ENCODE measurements at regions of chr17 and their contacts with region 1.

Region 1: DNA sequence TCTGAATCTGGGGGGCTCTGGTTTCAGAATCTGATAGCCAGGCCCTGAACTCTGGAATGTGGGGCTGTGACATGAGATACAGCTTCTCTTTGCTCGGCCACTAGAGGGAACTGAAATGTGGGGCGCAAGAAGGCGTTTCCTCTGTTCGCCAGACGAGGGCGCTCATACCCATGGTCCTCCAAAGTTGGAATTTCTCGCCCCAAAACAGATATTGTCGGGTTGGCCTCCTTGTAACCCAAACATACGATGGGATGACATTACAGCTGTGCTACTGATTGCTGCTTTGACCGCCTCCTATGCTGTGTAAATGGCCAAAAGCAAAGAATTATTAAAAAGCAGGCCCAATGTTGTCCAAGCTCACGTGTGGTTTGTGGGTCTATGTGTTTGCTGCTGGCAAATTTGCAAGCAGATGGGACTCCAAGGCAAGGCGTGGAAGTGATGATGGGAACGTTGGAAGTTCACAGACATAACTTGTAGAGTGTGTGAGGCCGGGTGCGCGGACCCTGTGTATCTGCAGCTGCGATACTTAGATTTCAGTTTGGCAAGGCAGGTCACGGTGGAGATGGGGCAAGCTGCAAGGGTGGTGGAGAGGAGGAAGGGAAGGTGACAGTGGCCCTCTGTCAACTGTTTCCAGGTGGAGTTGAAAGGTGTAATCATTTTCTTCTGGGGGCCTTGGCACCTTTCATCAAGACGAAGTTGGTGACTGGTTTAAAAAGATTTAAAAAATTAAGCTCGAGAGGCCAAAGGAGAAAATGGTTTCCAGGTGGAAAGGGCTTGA is 13.0 kb upstream of the MSI2 start:
- DNase-seq: peak; percentile 47 to 80 (median 70)
- H3K4me3 ChIP-seq: no peak overlapping the region
- H3K27ac ChIP-seq: no peak overlapping the region
- H3K4me1 ChIP-seq: peaks cover 7% of the 10 kb centered on the region
- H3K27me3 ChIP-seq: no peaks in the 10 kb centered on the region
- CTCF ChIP-seq: peak; percentile 80 to 97 (median 92)
- EP300 ChIP-seq: no peak
- POLR2A ChIP-seq: no peak

Region 2: DNA sequence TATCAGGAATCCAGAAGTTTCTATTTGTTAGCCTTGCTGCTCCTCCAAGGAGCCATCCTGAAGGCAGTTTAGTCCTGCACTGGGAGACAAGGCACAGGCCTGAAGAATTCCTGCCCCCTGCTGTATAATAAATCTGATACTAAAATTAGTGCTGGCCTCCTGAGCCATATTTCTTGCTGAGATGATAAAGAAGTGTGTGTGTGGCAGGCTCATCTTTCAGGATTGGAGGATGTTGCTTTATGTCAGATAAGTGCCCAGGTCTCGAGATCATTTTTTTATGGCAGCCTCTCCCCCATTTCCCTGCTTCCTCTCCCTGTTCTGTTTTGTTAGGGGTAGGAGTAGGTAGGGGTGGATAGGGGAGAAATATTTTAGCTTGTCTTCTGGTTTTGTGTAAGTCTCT is 38.9 kb after region 1 on chr17:
- intact Hi-C with region 1: no loop called
- DNase-seq: no peak
- H3K4me3 ChIP-seq: no peak overlapping the region
- H3K27ac ChIP-seq: peak overlapping the region; percentile 16 to 84
- H3K4me1 ChIP-seq: peaks cover 16% of the 10 kb centered on the region
- H3K27me3 ChIP-seq: no peaks in the 10 kb centered on the region
- CTCF ChIP-seq: no peak
- EP300 ChIP-seq: no peak
- POLR2A ChIP-seq: no peak

Region 3: DNA sequence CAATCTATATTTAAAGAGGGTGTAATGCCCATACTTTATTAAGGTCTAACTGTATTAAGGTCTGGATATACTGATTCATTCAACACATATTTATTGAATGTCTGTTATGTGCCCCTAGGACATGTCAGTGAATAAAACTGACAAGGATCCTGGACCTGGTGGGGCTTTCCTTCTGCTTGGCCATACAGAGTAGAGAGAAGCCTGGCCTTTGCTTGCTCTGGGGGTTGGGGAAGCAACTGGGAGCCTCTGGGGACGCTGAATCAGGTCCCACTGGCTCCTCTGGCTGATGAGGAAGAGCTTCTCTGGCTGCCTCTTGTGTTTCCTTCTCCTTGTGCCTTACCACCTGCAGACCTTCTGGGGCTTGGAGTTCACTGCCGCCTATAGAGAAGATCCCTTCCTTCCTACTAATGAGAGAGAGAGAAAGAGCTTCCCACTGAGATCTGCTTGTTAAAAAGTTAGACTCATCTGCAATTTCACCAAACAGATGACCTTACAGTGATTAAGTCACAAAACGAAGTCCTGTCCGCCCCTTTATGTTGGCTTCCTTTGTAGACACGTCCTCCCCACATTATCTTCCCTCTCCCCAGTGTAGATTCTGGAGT is 62.6 kb after region 1 on chr17:
- intact Hi-C with region 1: no loop called
- DNase-seq: no peak
- H3K4me3 ChIP-seq: no peak overlapping the region
- H3K27ac ChIP-seq: no peak overlapping the region
- H3K4me1 ChIP-seq: peaks cover 12% of the 10 kb centered on the region
- H3K27me3 ChIP-seq: no peaks in the 10 kb centered on the region
- CTCF ChIP-seq: no peak
- EP300 ChIP-seq: no peak
- POLR2A ChIP-seq: no peak

Region 4: GRCh38 chr17:57415751-57416207 is 172.4 kb after region 1 on chr17:
- intact Hi-C with region 1: loop called in 1 of 4 experiments (anchors 10 kb)
- DNase-seq: peak in 3 of 5 donors; percentile 50 to 56 (median 50)
- H3K4me3 ChIP-seq: no peak overlapping the region
- H3K27ac ChIP-seq: peak overlapping the region in 1 of 2 donors; percentile 21
- H3K4me1 ChIP-seq: peaks cover 8% of the 10 kb centered on the region
- H3K27me3 ChIP-seq: no peaks in the 10 kb centered on the region
- CTCF ChIP-seq: no peak
- EP300 ChIP-seq: no peak
- POLR2A ChIP-seq: no peak

Region 5: DNA sequence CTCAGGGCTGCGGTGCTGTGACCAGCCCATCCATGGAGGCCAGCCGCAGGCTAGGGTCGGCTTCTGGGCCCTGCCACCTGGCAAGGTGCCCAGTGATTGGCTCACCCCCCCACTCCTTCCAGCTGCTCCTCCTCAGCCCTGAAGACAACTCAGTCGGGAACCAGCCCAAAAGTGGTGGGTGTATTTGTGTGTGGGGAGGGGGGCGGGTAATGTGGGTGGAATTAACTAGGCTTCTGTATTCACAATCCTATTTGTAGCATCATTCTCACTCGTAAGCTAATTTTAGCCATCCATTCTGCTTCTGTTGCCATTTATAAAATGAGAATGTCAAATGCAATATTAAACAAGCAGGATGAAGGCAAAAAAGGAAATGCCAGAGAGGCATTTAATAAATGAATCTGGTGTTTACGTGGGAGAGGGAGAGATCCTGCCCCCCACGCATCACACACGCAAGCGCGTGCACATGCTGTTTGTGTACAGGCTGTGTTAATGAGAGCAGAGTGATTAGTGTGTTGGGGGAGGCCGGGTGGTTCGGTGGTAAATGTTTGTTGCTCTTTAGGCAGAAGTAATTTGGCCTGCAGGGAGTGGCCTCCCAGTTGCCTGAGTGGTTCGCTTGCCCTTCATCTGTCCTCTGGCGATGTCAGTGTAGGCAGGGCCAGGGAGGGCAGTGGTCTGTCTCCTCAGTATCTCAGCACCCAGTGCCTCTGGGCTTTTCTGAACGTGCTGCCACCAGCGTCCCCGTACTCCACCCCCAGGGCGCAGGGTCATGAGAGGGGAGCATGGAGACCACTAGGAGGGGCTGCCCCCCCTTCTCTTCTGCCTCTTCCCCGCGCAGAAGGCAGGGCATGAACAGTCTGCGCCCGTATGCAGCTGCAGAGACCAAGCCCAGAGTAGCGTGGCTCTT is 361.7 kb after region 1 on chr17:
- intact Hi-C with region 1: loop called in 1 of 4 experiments (anchors 10 kb)
- DNase-seq: peak; percentile 74 to 83 (median 80)
- H3K4me3 ChIP-seq: no peak overlapping the region
- H3K27ac ChIP-seq: peak overlapping the region; percentile 63 to 72
- H3K4me1 ChIP-seq: peaks cover 17% of the 10 kb centered on the region
- H3K27me3 ChIP-seq: no peaks in the 10 kb centered on the region
- CTCF ChIP-seq: peak in 1 of 3 donors; percentile 7
- EP300 ChIP-seq: no peak
- POLR2A ChIP-seq: no peak

Region 6: DNA sequence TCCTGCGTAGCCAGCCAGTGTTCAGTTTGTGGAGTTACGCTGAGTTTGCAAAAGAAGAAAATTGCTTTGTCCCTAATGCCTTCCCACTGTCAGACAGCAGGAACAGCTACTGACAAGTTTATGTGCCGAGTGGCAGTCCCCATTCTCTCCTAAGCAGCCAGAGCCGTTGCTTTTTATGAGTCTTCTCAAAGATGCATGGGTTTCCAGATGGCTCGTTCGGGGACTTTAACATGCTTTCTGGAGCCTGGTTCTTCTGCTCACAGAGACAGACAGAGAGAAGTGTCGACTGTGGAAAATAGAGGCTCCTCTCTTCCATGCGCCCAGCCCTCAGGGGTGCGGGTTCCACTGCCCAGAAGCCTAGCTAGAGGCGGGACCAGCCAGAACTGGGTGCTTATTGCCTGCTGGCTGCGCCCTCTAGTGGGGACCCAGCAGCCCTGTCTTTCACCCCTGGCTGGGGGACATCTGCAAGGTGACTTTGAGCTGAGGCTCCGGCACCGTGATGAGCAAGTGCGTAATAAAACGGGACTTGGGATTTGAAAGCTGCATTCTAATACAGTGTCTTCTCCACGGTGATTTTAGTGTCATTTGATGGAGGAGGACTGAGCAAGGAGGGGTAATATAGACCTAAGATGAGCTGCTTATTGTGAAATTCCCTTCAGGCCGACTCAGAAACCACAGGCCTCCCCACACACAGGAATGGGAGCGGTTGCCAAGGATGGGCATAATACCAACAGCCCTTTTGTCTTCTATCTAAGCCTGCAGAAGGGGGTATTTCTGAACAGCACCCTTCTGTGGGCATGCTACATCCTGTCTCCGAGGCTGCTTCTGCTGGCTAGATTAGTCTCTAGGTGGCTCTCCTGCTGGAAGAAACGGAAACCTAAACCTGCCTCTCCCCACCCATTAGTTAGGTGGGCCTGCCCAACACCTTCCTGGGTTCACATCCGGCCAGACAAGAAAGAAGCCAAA is 428.6 kb after region 1 on chr17:
- intact Hi-C with region 1: loop called in 1 of 4 experiments (anchors 5 kb)
- DNase-seq: peak; percentile 71 to 81 (median 77)
- H3K4me3 ChIP-seq: no peak overlapping the region
- H3K27ac ChIP-seq: no peak overlapping the region
- H3K4me1 ChIP-seq: no peaks in the 10 kb centered on the region
- H3K27me3 ChIP-seq: no peaks in the 10 kb centered on the region
- CTCF ChIP-seq: peak; percentile 82 to 86 (median 83)
- EP300 ChIP-seq: no peak
- POLR2A ChIP-seq: no peak

Region 7: DNA sequence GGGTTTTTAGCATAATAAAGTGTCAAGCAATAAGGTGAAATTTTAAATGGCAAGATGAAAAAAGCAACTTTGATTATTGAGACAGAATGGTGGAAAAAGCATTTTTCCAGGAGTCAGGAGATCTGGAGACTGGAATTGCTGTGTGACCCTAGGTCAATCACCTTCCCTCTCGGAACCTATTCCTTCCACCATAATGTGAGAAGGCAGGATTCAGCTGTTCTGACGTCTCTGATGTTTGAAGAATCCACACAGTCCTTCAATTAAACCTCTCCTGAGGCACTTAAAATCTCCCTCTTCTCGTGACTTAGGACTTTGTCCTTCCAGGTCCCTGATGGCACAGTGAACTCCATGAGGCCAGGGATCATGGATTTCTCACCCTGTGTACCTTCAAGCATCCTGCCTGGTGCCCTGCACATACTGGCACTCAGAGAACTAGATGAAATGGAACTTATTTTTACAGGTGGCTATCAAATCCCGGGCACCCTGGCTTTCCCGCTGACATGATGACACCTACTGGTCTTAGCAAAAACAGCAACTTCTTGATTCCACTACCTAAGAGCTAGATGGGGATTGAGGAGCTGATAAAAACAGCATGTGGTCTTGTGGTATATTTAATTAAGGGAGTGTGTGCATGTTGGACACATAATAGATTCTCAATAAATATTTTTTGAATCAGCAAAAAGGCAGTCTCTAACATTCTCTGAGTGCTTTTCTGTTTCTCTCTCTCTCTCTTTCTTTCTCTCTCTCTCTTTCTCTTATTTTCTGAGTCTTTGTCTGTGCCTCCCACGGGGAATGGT is 504.1 kb after region 1 on chr17:
- intact Hi-C with region 1: loop called in 2 of 4 experiments (anchors 10 kb)
- DNase-seq: peak in 3 of 5 donors; percentile 28 to 43 (median 33)
- H3K4me3 ChIP-seq: no peak overlapping the region
- H3K27ac ChIP-seq: no peak overlapping the region
- H3K4me1 ChIP-seq: no peaks in the 10 kb centered on the region
- H3K27me3 ChIP-seq: no peaks in the 10 kb centered on the region
- CTCF ChIP-seq: peak; percentile 65 to 74 (median 71)
- EP300 ChIP-seq: no peak
- POLR2A ChIP-seq: no peak

Region 8: GRCh38 chr17:57833179-57833939 is 590.0 kb after region 1 on chr17:
- intact Hi-C with region 1: loop called in 1 of 4 experiments (anchors 10 kb)
- DNase-seq: peak; percentile 64 to 76 (median 68)
- H3K4me3 ChIP-seq: peak overlapping the region; percentile 33
- H3K27ac ChIP-seq: peak overlapping the region in 1 of 2 donors; percentile 38
- H3K4me1 ChIP-seq: no peaks in the 10 kb centered on the region
- H3K27me3 ChIP-seq: no peaks in the 10 kb centered on the region
- CTCF ChIP-seq: peak; percentile 79 to 90 (median 83)
- EP300 ChIP-seq: no peak
- POLR2A ChIP-seq: no peak